ENCODE measurements at regions of chr16 and their contacts with region 1.

Region 1: GRCh38 chr16:68644715-68645493 is at the start of gene CDH3:
- DNase-seq: peak; percentile 88
- H3K4me3 Mint-ChIP-seq: peak within 1 kb of the TSS; percentile 89
- H3K27ac Mint-ChIP-seq: peak within 1 kb of the TSS; percentile 75
- H3K4me1 Mint-ChIP-seq: peaks cover 21% of the 10 kb centered on the region
- H3K27me3 Mint-ChIP-seq: no peaks in the 10 kb centered on the region
- CTCF ChIP-seq: no peak
- total RNA-seq, gene CDH3: 74.4 and 107 TPM in 2 replicates

Region 2: GRCh38 chr16:68599586-68599985 is 45.3 kb before region 1 on chr16:
- CTCF ChIA-PET with region 1: interaction called, 8 read pairs
- POLR2A ChIA-PET with region 1: interaction called, 18 read pairs
- intact Hi-C with region 1: loop called (anchors 5 kb)
- DNase-seq: no peak
- H3K4me3 Mint-ChIP-seq: no peak overlapping the region
- H3K27ac Mint-ChIP-seq: no peak overlapping the region
- H3K4me1 Mint-ChIP-seq: peaks cover 10% of the 10 kb centered on the region
- H3K27me3 Mint-ChIP-seq: no peaks in the 10 kb centered on the region
- CTCF ChIP-seq: no peak

Region 3: DNA sequence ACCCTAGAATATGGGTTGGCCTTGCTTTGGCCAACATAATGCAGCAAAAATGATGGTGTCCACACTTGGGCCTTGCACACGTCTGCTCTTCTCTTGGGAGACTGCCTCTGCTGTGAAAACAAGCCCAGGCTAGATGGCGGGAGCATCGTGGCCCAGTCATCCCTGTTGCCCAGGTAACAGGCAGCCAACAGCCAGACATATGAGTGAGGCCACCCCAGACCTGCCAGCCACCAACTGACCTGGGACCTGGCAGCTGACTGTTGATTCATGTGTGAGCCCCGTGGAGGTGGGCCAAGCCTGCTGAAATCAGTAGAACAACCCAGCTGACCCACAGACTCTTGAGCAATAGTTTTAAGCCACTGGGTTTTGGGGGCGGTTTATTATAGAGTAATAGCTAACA is 39.2 kb before region 1 on chr16:
- CTCF ChIA-PET with region 1: interaction called, 5 read pairs
- POLR2A ChIA-PET with region 1: interaction called, 16 read pairs
- intact Hi-C with region 1: no loop called
- DNase-seq: peak; percentile 87
- H3K4me3 Mint-ChIP-seq: no peak overlapping the region
- H3K27ac Mint-ChIP-seq: peak overlapping the region; percentile 18
- H3K4me1 Mint-ChIP-seq: peaks cover 9% of the 10 kb centered on the region
- H3K27me3 Mint-ChIP-seq: no peaks in the 10 kb centered on the region
- CTCF ChIP-seq: no peak

Region 4: GRCh38 chr16:68612996-68613395 is 31.9 kb before region 1 on chr16:
- CTCF ChIA-PET with region 1: no interaction called
- POLR2A ChIA-PET with region 1: interaction called, 15 read pairs
- intact Hi-C with region 1: no loop called
- DNase-seq: no peak
- H3K4me3 Mint-ChIP-seq: no peak overlapping the region
- H3K27ac Mint-ChIP-seq: peak overlapping the region; percentile 59
- H3K4me1 Mint-ChIP-seq: peaks cover 21% of the 10 kb centered on the region
- H3K27me3 Mint-ChIP-seq: no peaks in the 10 kb centered on the region
- CTCF ChIP-seq: no peak

Region 5: GRCh38 chr16:68658258-68659008 is 13.5 kb after region 1 on chr16:
- CTCF ChIA-PET with region 1: interaction called, 6 read pairs
- POLR2A ChIA-PET with region 1: interaction called, 162 read pairs
- intact Hi-C with region 1: no loop called
- DNase-seq: peak; percentile 98
- H3K4me3 Mint-ChIP-seq: peak overlapping the region; percentile 46
- H3K27ac Mint-ChIP-seq: peak overlapping the region; percentile 90
- H3K4me1 Mint-ChIP-seq: peaks cover 26% of the 10 kb centered on the region
- H3K27me3 Mint-ChIP-seq: no peaks in the 10 kb centered on the region
- CTCF ChIP-seq: no peak

Region 6: DNA sequence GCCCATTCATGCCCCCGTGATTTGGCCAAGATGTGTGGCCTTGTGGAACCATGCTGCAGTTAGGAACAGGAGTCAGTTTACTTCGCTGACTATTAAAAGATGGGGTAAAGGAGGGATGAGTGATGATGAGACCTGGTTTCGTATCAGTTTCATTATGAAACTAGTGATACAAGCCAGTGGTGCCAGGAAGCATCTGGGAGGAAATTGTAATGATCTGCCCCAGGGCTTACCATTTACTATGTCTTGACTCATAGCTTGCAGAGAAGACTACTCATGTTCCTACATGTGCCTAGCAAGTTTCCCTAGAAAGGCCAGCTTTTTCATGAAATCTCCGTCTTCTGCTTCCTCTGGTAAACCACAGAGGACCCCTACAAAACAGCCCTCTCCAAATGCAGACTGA is 23.4 kb after region 1 on chr16:
- CTCF ChIA-PET with region 1: no interaction called
- POLR2A ChIA-PET with region 1: interaction called, 98 read pairs
- intact Hi-C with region 1: no loop called
- DNase-seq: peak; percentile 95
- H3K4me3 Mint-ChIP-seq: peak overlapping the region; percentile 48
- H3K27ac Mint-ChIP-seq: peak overlapping the region; percentile 92
- H3K4me1 Mint-ChIP-seq: peaks cover 36% of the 10 kb centered on the region
- H3K27me3 Mint-ChIP-seq: no peaks in the 10 kb centered on the region
- CTCF ChIP-seq: no peak

Region 7: DNA sequence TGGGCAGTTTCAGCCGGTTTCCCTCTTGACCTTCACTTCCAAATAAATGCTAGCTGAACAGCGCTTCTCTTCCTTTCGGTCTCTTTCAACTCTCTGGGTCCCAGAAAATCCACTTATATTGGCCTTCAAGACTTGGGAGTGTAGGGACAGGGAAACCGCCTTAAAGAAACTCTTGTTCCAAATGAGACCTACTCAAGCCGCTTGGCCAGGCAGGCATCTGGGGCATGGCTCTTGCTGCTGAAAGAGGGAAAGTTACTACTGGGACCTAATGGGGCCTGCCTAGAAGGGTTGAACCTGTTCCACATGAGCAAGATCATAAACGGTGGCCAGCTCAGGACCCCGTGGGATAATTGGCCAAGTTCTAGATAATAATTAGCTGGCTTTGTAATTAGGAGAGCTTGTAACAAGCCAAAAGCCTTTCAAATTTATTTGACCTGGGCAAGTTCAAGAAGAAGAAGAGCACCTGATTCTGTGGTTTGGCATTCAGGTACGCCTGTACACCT is 105.3 kb after region 1 on chr16:
- CTCF ChIA-PET with region 1: no interaction called
- POLR2A ChIA-PET with region 1: no interaction called
- intact Hi-C with region 1: no loop called
- DNase-seq: no peak
- H3K4me3 Mint-ChIP-seq: no peak overlapping the region
- H3K27ac Mint-ChIP-seq: no peak overlapping the region
- H3K4me1 Mint-ChIP-seq: peaks cover 9% of the 10 kb centered on the region
- H3K27me3 Mint-ChIP-seq: no peaks in the 10 kb centered on the region
- CTCF ChIP-seq: no peak

Measured in MCF 10A (cell line).